BJ (cell line): ENCODE measurements at regions of chrX and their contacts with region 1.

Region 1: GRCh38 chrX:103343105-103343504 is 13.1 kb downstream of the TCEAL7 start:
- DNase-seq: no peak
- H3K4me3 ChIP-seq: no peak overlapping the region
- H3K27me3 ChIP-seq: peaks cover 3% of the 10 kb centered on the region; the same call in 1 of the 2 replicates
- CTCF ChIP-seq: peak; percentile 66

Region 2: DNA sequence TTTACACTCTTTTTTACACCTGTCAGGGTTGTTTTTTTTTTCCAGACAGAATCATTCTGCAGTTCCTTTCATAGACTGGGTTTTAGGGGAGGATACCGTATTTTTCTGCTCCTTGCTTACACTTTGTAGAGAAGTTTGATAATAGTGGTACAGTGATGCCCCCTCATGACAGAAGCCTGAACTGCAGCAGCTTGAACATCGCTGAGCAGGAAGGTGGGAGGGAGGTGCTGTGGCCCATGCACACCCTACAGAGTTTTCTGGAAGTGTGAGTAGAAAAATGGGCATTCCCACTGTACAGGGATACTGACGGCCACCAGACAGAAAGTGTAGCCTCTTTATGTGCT is 121.6 kb after region 1 on chrX:
- CTCF ChIA-PET with region 1: interaction called, 28 read pairs
- POLR2A ChIA-PET with region 1: no interaction called
- DNase-seq: no peak
- H3K4me3 ChIP-seq: no peak overlapping the region
- H3K27me3 ChIP-seq: no peaks in the 10 kb centered on the region
- CTCF ChIP-seq: peak; percentile 76